ENCODE measurements at regions of chr12 and their contacts with region 1.

Region 1: GRCh38 chr12:59087077-59087673 is 166.9 kb upstream of the LRIG3 start:
- DNase-seq: no peak
- ATAC-seq: peak in 1 of 2 donors; percentile 33

Region 2: DNA sequence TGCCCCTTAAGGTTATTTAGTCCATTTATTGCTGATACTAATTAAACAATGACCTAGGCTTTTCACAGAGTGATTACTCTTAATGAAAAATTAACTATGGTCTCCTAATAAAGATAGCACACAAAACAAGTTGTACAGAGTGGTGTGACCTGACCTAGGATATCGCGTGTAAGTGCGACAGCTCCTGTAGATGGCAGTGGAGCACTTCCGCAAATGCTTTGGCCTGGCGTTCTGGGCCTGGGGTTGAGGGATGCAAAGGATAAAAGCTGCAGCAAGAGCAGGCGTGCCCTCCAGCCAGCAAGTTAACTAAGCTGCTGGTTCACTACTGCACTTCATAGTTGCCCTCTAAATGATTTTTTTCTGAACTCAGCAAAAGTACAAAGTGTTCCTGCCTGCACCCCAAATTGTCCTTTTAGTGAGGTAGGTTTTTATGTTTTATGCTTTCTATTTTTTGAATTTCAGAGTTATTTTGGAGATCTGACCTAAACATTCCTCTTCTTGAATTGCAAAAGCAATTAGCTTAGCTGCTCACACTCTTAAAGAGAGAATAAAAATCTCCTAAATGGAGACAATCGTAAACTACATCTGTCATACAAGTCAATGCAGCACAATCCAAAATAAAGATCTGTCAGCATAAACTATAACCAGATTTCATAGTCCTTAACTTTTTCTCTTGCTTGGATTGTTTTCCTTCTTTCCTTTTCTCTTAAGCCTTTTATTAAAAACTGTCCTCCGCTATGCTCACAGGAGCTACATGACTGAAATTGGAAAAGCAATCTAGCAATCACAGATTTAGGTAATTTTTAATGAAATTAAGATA is 546.5 kb before region 1 on chr12:
- intact Hi-C with region 1: loop called (anchors 5 to 10 kb)
- DNase-seq: peak; percentile 63
- ATAC-seq: peak; percentile 87 to 94

Region 3: DNA sequence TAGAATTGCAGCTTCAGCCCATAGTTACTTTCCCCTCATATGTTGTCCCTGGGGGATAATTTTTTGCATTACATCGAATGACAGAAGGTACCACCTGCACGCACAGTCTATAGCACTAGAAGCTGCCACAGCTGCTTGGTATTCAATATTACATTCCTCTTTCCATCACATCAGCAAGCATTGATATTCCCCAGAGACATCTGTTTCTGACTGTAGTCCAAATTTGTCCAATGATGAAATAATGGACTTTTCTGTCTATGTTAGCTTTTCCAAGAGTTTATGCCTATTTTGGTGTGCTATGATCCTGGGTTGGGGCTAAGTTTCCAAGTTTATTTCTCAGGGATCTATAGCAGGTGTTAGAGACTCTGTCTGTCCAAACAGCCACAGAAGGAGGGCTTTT is 502.3 kb before region 1 on chr12:
- intact Hi-C with region 1: no loop called
- DNase-seq: no peak
- ATAC-seq: peak in 1 of 2 donors; percentile 53

Measured in left cardiac atrium (tissue), 4 donors.